Activated CD4-positive, alpha-beta T cell treated with anti-CD3 and anti-CD28 coated beads for 36 hours (primary cell): ENCODE measurements at regions of chr10 and their contacts with region 1.

Region 1: DNA sequence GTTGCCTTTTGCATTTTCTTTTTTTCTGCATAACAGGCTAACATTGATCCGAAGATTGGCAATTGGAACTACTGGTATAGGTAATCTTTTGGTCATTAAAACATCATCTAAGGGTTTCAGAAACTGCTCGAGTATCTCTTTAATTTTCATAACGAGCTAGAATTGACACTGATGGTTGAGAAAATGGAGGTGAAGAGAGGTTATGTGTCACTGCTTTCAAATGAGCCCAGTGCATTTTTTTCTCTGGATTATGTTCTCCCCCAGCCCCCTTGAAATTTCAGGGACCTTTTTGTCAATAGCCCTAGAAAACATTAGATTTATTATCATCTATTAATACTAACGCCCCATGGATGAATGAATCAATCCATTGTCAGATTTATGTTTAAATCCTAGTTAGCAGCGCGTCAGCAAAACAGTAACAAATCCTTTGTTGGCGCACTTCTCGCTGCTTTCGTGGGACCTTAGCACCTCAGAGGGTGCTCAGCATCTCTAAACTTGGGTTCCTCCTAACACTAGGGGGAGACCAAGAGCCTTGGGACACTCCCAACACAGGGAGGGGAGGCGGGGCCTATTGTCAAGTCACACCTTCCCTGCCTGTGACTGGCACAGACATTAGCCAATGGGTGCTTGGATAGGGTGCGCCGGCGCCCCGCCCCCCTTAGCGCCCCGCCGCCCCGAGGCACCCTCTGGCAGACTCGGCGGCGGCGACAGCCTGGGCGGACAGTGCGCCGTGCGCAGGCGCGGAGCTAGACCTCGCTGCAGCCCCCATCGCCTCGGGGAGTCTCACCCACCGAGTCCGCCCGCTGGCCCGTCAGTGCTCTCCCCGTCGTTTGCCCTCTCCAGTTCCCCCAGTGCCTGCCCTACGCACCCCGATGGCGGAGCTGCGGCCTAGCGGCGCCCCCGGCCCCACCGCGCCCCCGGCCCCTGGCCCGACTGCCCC is at the start of gene SUFU:
- DNase-seq: peak; percentile 99
- ATAC-seq: peak; percentile 78
- H3K4me3 Mint-ChIP-seq: no peak within 1 kb of the TSS
- H3K27ac Mint-ChIP-seq: peak within 1 kb of the TSS; percentile 82
- H3K4me1 Mint-ChIP-seq: peaks cover 28% of the 10 kb centered on the region
- H3K27me3 Mint-ChIP-seq: no peaks in the 10 kb centered on the region
- total RNA-seq, gene SUFU: 8.4 to 9.5 TPM

Region 2: DNA sequence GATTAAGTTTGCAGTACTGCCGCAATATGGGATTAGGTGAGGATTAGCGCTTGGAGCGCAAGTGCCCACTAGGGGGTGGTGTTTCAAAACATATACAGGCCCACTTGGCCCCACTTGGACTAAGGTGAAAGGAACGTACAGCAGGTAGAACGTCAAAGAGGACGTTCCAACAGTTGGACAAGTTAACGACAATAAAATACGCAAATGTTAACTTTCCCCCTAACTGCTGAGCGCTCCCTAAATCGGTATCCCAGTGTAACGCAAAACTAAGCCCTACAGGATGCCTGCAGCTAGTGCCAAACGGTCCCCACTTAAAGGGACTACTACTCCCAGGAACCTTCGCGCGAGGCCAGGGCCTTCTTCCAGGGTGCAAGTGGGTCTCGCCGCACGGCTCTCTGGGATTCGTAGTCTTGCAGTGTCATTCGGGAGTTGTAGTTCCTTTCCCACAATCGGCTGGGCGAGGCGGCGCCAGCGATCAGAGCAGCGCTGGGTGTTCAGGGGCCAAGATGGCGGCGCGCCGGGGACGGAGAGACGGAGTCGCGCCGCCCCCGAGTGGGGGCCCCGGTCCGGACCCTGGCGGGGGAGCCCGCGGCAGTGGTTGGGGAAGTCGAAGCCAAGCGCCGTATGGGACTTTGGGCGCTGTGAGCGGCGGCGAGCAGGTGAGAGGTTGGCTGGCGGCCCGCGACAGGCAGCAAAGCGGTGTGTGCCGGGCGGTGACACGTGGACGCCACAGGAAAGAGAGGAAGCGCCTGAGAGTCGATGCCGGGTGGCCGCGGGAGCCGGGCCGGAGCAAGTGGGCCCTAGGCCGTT is 370.8 kb before region 1 on chr10 and contains the start of gene PPRC1:
- CTCF ChIA-PET with region 1: no interaction called
- POLR2A ChIA-PET with region 1: no interaction called
- intact Hi-C with region 1: loop called (anchors 1 kb)
- DNase-seq: peak; percentile 99
- ATAC-seq: peak; percentile 96
- H3K4me3 Mint-ChIP-seq: peak within 1 kb of the TSS; percentile 94
- H3K27ac Mint-ChIP-seq: peak within 1 kb of the TSS; percentile 94
- H3K4me1 Mint-ChIP-seq: peaks cover 38% of the 10 kb centered on the region
- H3K27me3 Mint-ChIP-seq: no peaks in the 10 kb centered on the region
- total RNA-seq, gene PPRC1: 61.3 to 74.7 TPM

Region 3: DNA sequence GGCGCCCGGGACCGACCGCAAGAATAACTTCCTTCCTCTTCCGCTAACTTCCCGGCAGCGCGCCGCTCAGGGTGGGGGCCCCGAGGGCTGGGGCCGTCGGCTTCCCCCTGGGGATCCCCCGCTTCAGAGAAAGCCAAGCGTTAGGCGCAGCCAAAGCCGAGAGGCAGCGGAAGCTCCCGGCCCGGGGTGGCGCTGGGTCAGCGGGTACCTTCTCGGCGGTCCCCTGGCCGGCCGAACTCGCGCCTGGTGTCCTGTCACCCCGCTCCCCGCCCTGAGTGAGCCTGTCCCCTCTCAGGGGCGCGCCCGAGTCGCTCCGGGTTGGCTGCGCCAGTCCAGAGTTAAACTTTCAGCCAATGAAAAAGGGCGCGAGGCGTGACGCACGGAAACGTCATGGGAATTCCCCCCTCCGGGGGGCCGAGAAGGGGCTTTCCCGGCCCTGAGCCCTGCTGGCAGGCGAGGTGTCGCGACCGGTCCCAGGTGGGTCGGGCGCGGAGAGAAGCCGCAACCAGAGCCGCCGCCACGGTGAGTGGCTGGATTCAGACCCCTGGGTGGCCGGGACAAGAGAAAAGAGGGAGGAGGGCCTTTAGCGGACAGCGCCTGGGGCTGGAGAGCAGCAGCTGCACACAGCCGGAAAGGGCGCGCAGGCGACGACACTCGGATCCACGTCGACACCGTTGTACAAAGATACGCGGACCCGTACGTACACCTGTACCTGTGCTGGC is 109.3 kb before region 1 on chr10:
- CTCF ChIA-PET with region 1: interaction called, 6 read pairs
- POLR2A ChIA-PET with region 1: no interaction called
- intact Hi-C with region 1: loop called (anchors 1 kb)
- DNase-seq: peak; percentile 99
- ATAC-seq: peak; percentile 87
- H3K4me3 Mint-ChIP-seq: peak overlapping the region; percentile 95
- H3K27ac Mint-ChIP-seq: peak overlapping the region; percentile 99
- H3K4me1 Mint-ChIP-seq: peaks cover 41% of the 10 kb centered on the region
- H3K27me3 Mint-ChIP-seq: no peaks in the 10 kb centered on the region

Region 4: DNA sequence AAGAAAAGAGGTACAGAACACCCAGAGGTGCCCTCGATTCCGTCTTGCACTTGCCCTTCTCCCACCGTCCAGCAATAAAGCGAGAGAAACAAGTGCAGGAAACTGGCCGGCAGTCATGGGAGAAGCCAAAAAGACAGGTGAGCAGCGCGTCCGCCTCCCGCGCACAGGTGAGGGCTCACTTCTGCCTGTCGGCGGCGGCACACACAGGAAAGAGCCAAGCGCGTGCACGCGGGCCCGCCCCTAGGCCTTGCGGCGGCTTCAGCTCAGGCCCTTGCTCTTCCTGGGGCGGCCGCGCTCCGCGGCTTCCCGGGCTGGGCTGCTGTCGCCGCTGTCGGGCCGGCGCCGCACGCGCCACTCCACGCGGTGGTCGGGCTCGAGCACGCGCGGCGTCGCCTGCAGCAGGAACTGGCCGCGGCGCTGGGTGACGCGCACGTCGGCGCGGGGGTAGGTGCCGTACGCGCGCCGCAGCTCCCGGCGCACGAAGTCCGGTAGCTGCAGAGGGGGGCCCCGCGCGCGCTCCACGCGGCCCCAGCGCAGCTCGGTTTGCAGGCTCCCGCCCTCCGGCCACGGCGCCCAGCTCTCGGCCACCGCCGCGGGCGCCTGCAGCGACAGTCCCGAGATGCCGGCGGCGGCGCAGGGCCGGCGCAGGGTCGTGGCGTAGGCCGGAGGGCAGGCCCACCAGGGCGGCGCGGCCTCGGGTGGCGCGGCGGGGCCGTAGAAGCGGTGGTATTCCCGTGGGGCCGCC is 53.2 kb before region 1 on chr10:
- CTCF ChIA-PET with region 1: interaction called, 3 read pairs
- POLR2A ChIA-PET with region 1: no interaction called
- intact Hi-C with region 1: loop called (anchors 1 kb)
- DNase-seq: peak; percentile 91
- ATAC-seq: peak; percentile 66
- H3K4me3 Mint-ChIP-seq: peak overlapping the region; percentile 95
- H3K27ac Mint-ChIP-seq: peak overlapping the region; percentile 93
- H3K4me1 Mint-ChIP-seq: peaks cover 25% of the 10 kb centered on the region
- H3K27me3 Mint-ChIP-seq: no peaks in the 10 kb centered on the region

Region 5: GRCh38 chr10:102713814-102714620 is 210.5 kb after region 1 on chr10 and contains the start of gene ARL3:
- CTCF ChIA-PET with region 1: interaction called, 3 read pairs
- POLR2A ChIA-PET with region 1: no interaction called
- intact Hi-C with region 1: loop called (anchors 1 to 2 kb)
- DNase-seq: peak; percentile 99
- ATAC-seq: peak; percentile 90
- H3K4me3 Mint-ChIP-seq: peak within 1 kb of the TSS; percentile 82
- H3K27ac Mint-ChIP-seq: peak within 1 kb of the TSS; percentile 81
- H3K4me1 Mint-ChIP-seq: peaks cover 59% of the 10 kb centered on the region
- H3K27me3 Mint-ChIP-seq: no peaks in the 10 kb centered on the region
- total RNA-seq, gene ARL3: 6.4 to 6.9 TPM

Region 6: GRCh38 chr10:102845352-102845902 is 341.9 kb after region 1 on chr10:
- CTCF ChIA-PET with region 1: no interaction called
- POLR2A ChIA-PET with region 1: no interaction called
- intact Hi-C with region 1: no loop called
- DNase-seq: no peak
- ATAC-seq: no peak
- H3K4me3 Mint-ChIP-seq: no peak overlapping the region
- H3K27ac Mint-ChIP-seq: no peak overlapping the region
- H3K4me1 Mint-ChIP-seq: no peaks in the 10 kb centered on the region
- H3K27me3 Mint-ChIP-seq: peaks cover 3% of the 10 kb centered on the region

Region 7: DNA sequence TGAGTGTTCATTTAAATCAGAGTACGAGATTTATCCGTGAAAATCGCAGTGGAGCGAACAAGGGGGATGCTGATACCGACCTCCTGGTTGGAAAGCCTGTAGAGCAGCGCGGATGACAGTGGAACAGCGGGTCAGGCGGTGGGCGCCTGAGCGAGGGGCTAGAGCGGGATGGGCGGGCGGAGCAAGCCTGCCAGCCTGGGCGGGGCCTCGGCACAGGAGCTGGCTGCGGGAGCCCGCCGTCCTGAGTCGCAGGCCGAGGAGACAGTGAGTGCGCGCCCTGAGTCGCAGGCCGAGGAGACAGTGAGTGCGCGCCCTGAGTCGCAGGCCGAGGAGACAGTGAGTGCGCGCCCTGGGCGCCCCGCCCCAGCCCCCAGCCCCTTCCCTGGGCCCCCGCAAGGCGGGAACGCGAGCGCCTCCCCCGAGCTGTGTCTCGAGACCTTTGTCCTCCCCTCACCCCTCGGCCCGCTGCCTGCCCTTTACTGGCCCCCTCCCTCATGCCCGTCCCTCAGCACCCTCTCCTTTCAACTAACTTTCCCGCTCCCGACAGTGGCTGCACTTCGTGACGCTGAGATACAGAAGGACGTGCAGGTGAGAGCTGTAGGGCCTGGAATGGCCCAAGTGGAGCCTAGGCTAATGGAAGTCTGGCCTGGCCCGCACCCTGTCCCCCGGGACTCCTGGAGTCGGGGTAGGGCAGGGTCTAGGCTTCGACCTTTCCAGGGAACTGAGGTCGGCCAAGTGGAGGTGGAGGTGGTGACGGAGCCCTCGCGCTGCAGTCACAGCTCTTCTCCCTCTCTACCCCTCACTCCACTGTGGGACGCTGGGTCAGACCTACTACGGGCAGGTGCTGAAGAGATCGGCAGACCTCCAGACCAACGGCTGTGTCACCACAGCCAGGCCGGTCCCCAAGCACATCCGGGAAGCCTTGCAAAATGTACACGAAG is 366.0 kb after region 1 on chr10 and contains the start of gene AS3MT:
- CTCF ChIA-PET with region 1: no interaction called
- POLR2A ChIA-PET with region 1: no interaction called
- intact Hi-C with region 1: no loop called
- DNase-seq: peak; percentile 55
- ATAC-seq: peak; percentile 95
- H3K4me3 Mint-ChIP-seq: peak within 1 kb of the TSS; percentile 60
- H3K27ac Mint-ChIP-seq: no peak within 1 kb of the TSS
- H3K4me1 Mint-ChIP-seq: peaks cover 6% of the 10 kb centered on the region
- H3K27me3 Mint-ChIP-seq: peaks cover 15% of the 10 kb centered on the region
- total RNA-seq, gene AS3MT: 1.1 to 1.5 TPM

Region 8: DNA sequence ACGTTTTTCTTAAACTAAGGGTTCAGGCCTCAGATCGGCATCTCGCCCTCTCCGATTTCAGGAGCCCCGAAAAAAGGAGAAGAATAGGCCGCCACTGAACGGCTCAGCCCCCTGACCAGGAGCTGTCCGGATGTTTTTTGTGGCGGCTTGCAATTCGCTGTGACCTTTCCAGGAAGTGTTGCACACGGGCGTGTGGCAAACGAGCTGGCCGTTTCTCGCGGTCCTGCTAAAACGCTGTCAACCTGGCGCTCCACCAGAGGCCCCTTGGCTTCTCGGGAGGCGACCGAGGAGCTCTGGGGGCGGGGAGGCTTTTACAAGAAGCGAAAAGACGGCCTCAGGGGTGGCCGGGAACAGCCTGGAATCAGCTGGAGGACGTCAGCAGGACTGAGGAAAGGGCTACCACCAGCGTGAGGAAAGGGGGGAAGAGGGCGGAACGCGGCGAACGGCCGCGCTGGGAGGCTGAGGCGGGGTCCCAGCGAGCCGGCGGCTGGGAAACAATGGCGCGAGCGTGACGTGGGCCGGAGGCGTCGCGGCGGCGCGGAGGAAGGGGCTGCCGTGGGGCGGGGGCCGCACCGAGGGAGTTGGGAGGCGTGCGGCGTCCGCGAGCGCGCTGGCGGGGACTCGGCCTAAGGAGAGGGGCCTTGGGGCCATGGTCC is 689.0 kb after region 1 on chr10:
- CTCF ChIA-PET with region 1: no interaction called
- POLR2A ChIA-PET with region 1: no interaction called
- intact Hi-C with region 1: loop called in 1 of 2 experiments (anchors 2 kb)
- DNase-seq: peak; percentile 81
- ATAC-seq: peak; percentile 50
- H3K4me3 Mint-ChIP-seq: peak overlapping the region; percentile 95
- H3K27ac Mint-ChIP-seq: peak overlapping the region; percentile 99
- H3K4me1 Mint-ChIP-seq: peaks cover 44% of the 10 kb centered on the region
- H3K27me3 Mint-ChIP-seq: no peaks in the 10 kb centered on the region